ENCODE measurements at regions of chr4 and their contacts with region 1.

Region 1: DNA sequence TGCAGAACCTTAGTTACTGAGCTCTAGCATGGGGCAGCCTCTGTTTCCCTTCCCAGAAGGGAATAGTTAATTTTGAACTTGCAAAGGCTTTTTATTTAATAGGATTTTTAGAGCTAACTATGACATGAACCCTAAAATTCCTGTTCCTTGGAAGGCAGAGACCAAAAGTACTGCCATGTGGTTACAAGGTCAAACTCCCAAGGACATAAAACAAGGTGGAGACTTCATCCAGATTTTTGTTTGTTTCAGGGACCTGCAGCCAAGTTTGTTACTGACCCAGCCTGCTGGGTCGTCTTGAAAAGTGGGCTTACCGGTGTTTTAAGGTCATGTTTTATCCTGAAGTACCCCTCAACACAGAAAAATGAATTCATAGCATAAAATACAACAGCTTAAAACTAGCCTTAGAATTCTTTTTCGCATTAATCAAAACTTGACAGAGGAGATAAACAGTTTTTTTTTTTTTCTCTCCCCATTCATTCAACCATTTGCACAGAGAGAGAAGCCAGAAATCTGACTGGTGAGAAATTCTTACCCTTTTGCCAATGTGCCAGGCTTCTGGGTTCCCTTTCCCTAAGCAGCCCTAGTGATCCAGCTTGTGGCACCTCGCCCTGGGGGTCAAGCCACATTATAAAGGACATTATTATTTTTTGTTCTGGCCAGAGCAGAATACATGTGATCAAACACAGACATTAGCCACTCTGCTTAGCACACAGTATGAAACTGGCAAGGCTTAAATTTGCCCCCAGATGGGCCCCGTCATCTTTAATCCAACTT is 21.5 kb upstream of the GRPEL1 start:
- DNase-seq: no peak
- H3K4me3 ChIP-seq: no peak overlapping the region
- H3K27ac ChIP-seq: no peak overlapping the region
- H3K4me1 ChIP-seq: no peaks in the 10 kb centered on the region
- H3K27me3 ChIP-seq: peaks cover 7% of the 10 kb centered on the region; the same call in 1 of the 2 replicates
- CTCF ChIP-seq: no peak

Region 2: DNA sequence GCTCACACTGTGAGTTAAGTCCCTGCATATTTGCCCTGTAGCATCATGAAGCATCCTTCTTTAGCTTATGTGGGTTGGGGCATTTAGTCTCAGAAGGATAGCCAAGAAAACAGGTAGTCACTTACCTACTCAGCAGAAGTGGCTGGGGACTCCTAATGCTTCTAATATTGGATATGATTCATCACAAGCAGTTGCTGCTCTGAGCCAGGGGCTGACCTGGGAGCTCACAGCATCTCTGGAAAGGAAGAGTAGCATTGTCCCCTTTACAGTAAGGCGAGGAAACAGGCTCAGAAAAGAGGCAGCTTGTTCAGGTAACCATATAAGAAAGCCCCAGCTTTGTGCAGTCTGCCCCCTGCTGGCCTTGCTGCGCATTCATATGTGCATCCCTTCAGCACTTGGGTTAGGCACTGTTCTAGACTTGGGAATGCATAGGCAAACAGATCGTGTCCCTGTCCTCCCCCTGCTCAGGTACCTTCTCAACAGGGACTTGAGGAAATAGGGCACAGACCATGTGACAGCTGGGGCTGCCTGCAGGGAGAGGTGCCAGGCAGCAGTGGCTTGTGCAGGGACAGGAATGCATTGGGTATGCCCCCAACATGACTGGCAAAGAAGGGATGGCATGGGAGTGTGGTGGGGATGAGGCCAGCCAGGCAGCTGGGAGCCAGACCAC is 215.5 kb before region 1 on chr4:
- CTCF ChIA-PET with region 1: no interaction called
- POLR2A ChIA-PET with region 1: interaction called, 11 read pairs
- intact Hi-C with region 1: no loop called
- DNase-seq: peak in 1 of 2 experiments; percentile 58
- H3K4me3 ChIP-seq: no peak overlapping the region
- H3K27ac ChIP-seq: no peak overlapping the region
- H3K4me1 ChIP-seq: no peaks in the 10 kb centered on the region
- H3K27me3 ChIP-seq: no peaks in the 10 kb centered on the region
- CTCF ChIP-seq: peak; percentile 79